ENCODE measurements at regions of chr14 and their contacts with region 1.

Region 1: GRCh38 chr14:53126731-53127130 is 26.4 kb downstream of the DDHD1 start:
- DNase-seq: no peak
- H3K4me3 ChIP-seq: no peak overlapping the region
- H3K27ac ChIP-seq: no peak overlapping the region
- H3K4me1 ChIP-seq: peaks cover 4% of the 10 kb centered on the region
- H3K27me3 ChIP-seq: no peaks in the 10 kb centered on the region
- CTCF ChIP-seq: no peak

Region 2: DNA sequence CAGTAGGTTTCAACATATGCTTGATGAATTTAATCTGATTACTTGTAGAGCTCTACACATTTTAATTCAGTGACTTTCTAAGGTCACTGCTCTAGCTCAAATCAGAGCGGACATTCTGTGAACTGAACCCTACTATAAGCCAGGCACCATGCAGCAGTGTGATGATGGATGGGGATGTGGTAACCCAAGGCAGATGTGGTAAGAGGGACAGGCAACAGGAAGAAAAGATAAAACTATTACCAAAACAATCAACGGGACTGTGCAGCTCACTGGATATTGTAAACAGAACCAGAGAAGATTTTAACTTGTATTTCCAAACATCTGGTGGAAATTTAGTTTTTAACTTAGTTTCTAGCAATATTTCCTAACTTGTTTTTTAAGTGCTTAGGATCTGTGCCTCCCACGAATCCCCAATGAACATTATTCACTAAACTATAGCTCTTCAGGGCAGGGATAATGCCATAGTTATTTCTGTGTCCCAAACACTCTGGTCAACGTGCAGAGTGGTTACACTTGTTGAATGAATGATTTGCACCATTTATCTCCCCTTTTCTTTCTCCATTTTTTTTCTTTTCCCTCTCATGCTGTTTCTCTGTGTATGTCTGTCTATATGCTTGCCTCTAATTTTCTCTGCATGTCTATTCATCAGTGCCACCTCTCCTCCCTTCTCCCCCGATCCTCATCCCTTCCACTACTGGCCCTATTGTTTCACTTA is 434.3 kb before region 1 on chr14:
- CTCF ChIA-PET with region 1: no interaction called
- POLR2A ChIA-PET with region 1: no interaction called
- intact Hi-C with region 1: no loop called
- DNase-seq: no peak
- H3K4me3 ChIP-seq: no peak overlapping the region
- H3K27ac ChIP-seq: no peak overlapping the region
- H3K4me1 ChIP-seq: peaks cover 26% of the 10 kb centered on the region
- H3K27me3 ChIP-seq: no peaks in the 10 kb centered on the region
- CTCF ChIP-seq: no peak

Region 3: DNA sequence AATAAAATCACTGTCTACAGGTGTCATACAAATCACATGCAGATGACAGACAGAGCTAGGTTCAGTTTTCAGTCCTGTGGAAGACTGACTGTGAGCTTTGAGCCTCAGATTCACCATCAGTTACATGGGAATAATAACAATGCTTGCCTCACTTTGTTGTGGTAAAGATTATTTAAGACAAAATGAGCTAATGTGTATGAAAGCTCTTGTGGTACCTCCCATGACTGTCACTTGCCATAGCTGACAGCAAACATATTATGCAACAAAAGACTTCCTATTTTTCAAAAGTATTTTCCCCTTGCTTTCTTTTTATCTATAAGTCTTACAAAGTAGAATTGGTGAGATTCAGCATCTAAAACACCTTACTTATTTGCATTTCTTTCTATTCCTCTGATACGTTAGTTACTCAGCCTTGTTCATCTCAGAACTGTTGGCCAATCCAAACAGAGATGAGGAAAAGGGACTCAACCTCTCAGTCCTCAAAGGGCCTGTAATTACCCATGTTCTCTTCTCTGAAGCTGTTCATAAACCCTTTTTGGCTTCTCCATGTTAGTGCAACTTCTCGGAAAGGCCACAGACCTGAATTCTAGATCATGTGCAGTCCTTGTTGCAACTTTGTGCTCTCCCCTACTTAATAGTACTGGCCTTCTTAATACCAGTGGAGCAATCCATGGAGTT is 35.2 kb after region 1 on chr14:
- CTCF ChIA-PET with region 1: interaction called, 10 read pairs
- POLR2A ChIA-PET with region 1: no interaction called
- intact Hi-C with region 1: no loop called
- DNase-seq: no peak
- H3K4me3 ChIP-seq: no peak overlapping the region
- H3K27ac ChIP-seq: no peak overlapping the region
- H3K4me1 ChIP-seq: no peaks in the 10 kb centered on the region
- H3K27me3 ChIP-seq: no peaks in the 10 kb centered on the region
- CTCF ChIP-seq: no peak